Activated CD4-positive, alpha-beta memory T cell treated with anti-CD3 and anti-CD28 coated beads for 36 hours (primary cell): ENCODE measurements at regions of chr3 and their contacts with region 1.

Region 1: DNA sequence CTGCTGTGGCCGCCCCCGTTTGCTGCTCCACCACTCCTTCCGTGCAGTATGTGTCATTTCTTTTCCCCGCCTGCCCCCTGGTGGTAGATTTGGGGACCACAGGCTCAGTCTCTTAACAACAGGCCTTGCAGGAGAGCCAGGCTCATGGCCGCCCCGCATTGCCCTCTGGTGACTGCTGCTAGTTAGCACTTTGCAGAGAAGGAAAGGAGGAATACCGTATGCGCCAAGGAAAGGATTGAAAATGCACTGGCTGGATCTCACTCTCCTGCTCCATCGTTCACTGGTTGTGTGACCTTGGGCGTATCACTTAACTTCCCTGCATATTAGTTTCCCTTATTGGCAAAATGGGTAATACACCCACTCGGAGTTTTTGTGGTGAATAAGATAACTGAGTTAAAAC is 39.3 kb upstream of the PXYLP1 start:
- DNase-seq: peak; percentile 98
- H3K4me3 Mint-ChIP-seq: no peak overlapping the region
- H3K27ac Mint-ChIP-seq: no peak overlapping the region
- H3K4me1 Mint-ChIP-seq: peaks cover 13% of the 10 kb centered on the region
- H3K27me3 Mint-ChIP-seq: peaks cover 7% of the 10 kb centered on the region

Region 2: DNA sequence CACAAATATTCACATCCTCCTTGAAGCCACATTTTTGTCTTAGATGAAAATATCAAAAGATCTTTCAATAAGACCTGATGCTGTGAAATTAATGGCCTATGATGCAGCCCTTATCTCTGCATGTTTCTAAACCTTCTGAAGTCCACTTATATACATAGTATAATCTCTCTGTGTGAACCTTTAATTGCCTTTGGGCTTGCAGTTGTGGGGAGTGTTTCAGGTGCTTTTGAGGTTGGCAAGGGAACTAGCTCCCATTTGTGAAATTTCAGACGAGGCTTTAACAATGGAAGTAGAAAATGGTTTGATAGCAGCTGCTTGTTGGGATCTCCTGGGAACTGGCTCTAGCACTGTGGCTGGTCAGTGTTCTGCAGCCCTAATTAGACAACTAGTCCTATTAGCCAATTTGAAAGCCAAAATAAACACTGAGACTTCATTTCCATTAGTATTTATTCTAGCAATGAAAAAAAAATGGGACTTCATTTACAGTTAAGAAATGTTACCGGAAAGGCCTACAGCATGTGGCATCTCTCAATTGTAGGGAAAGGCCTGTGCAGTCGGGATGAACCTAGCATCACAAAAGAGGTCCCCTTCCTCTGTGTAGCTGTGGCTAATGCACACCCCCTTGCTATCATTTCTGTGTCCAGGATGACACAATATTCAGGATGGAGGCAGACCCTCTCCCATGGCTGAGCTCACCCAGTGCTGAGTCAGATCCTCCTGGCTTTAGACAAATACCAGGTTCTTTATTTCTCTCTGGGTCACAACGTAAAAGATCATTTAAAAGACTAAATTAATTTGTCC is 655.2 kb before region 1 on chr3:
- CTCF ChIA-PET with region 1: no interaction called
- POLR2A ChIA-PET with region 1: no interaction called
- intact Hi-C with region 1: no loop called
- DNase-seq: no peak
- H3K4me3 Mint-ChIP-seq: no peak overlapping the region
- H3K27ac Mint-ChIP-seq: no peak overlapping the region
- H3K4me1 Mint-ChIP-seq: no peaks in the 10 kb centered on the region
- H3K27me3 Mint-ChIP-seq: no peaks in the 10 kb centered on the region

Region 3: GRCh38 chr3:140941434-140942220 is 250.7 kb before region 1 on chr3 and contains the start of gene SLC25A36:
- CTCF ChIA-PET with region 1: interaction called, 3 read pairs
- POLR2A ChIA-PET with region 1: no interaction called
- intact Hi-C with region 1: loop called (anchors 1 kb)
- DNase-seq: peak; percentile 98
- H3K4me3 Mint-ChIP-seq: peak within 1 kb of the TSS; percentile 92
- H3K27ac Mint-ChIP-seq: peak within 1 kb of the TSS; percentile 83
- H3K4me1 Mint-ChIP-seq: peaks cover 37% of the 10 kb centered on the region
- H3K27me3 Mint-ChIP-seq: no peaks in the 10 kb centered on the region
- total RNA-seq, gene SLC25A36: 44.7 to 56.5 TPM

Region 4: DNA sequence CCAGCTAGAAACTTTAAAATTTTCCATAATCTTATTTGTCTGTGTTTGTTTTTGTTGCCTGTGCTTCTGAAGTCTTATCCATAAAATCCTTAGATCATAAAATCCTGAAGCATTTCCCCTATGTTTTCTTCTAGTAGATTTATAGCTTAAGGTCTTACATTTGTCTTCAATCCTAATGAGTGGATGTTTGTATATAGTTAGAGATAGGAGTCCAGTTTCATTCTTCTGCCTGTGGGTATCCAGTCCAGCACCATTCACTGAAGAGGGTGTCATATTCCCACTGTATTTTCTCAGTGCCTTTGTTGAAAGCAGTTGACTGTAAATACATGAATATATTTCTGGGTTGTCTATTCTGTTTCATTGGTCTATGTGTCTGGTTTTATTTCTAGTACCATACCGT is 186.0 kb before region 1 on chr3:
- CTCF ChIA-PET with region 1: interaction called, 33 read pairs
- POLR2A ChIA-PET with region 1: no interaction called
- intact Hi-C with region 1: loop called (anchors 1 kb)
- DNase-seq: no peak
- H3K4me3 Mint-ChIP-seq: no peak overlapping the region
- H3K27ac Mint-ChIP-seq: no peak overlapping the region
- H3K4me1 Mint-ChIP-seq: peaks cover 2% of the 10 kb centered on the region
- H3K27me3 Mint-ChIP-seq: peaks cover 15% of the 10 kb centered on the region

Region 5: GRCh38 chr3:141049681-141050080 is 142.7 kb before region 1 on chr3:
- CTCF ChIA-PET with region 1: interaction called, 14 read pairs
- POLR2A ChIA-PET with region 1: no interaction called
- intact Hi-C with region 1: no loop called
- DNase-seq: peak; percentile 23
- H3K4me3 Mint-ChIP-seq: no peak overlapping the region
- H3K27ac Mint-ChIP-seq: no peak overlapping the region
- H3K4me1 Mint-ChIP-seq: peaks cover 15% of the 10 kb centered on the region
- H3K27me3 Mint-ChIP-seq: peaks cover 50% of the 10 kb centered on the region

Region 6: DNA sequence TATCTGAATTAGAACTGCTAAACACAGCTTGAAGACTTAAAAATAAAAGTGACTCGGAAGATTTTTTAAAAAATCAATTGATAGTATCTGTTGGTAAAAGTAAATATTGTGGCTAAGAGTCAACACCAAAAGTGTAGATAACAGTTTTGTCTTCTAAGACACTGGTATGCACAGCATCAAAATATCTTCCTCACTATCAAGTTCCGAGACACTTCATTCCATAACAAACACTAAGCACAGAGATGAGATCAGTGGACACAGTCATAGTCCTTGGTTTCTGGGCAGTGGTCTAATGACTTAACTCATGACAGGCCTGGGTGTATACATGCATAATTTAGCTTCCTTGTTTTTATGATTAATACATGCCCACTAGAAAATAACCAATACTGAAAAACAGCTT is 102.5 kb after region 1 on chr3:
- CTCF ChIA-PET with region 1: no interaction called
- POLR2A ChIA-PET with region 1: no interaction called
- intact Hi-C with region 1: no loop called
- DNase-seq: no peak
- H3K4me3 Mint-ChIP-seq: peak overlapping the region; percentile 4
- H3K27ac Mint-ChIP-seq: peak overlapping the region; percentile 34
- H3K4me1 Mint-ChIP-seq: peaks cover 16% of the 10 kb centered on the region
- H3K27me3 Mint-ChIP-seq: no peaks in the 10 kb centered on the region